ENCODE measurements at regions of chr12 and their contacts with region 1.

Region 1: DNA sequence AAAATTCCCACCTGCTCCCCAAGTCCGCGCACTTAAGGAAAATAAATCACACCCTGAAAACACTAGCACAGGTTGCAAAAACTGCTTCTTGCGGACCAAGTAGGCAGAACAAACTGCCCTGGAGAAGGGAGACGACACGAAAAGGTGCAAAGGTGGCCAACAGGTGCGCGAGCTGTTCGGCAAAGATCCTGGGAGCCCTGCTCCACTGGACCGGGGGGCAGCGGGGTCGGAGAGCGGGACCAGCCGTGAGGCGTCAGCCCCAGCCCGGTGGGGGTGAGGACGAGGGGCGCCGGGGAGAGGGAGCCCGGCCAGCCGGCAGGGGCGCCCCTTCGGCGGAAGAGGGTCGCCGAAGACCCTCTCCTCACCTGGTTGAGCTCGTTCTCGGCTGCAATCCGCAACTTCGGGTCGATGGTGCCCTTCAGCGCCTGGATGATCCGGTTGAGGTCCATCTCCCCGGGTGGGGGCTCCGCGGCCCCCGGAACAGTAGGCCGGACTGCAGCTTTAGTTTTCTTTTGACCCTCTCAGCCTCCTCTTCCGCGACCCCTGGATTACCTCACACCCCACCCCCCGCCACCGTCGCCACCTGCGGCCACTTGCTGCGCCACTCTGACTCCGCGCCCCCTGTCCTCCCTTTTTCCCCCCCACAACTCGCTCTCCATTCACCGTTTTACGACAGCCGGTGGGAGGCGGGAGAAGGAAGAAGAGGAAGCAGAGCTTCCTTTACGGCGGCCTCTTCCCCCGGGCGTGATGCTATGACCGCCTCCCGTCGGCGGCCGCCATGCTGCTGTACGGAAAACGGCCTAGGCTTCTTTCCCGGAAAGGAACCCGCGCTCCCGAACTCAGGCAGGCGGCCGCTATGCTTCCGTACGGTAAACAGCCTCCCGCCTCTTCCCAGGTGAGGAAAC is at the start of gene IPO8:
- DNase-seq: peak; percentile 84
- H3K4me3 Mint-ChIP-seq: peak within 1 kb of the TSS; percentile 94
- H3K27ac Mint-ChIP-seq: peak within 1 kb of the TSS; percentile 79
- H3K4me1 Mint-ChIP-seq: peaks cover 29% of the 10 kb centered on the region
- H3K27me3 Mint-ChIP-seq: peaks cover 3% of the 10 kb centered on the region
- total RNA-seq, gene IPO8: 41.7 to 46.1 TPM

Region 2: DNA sequence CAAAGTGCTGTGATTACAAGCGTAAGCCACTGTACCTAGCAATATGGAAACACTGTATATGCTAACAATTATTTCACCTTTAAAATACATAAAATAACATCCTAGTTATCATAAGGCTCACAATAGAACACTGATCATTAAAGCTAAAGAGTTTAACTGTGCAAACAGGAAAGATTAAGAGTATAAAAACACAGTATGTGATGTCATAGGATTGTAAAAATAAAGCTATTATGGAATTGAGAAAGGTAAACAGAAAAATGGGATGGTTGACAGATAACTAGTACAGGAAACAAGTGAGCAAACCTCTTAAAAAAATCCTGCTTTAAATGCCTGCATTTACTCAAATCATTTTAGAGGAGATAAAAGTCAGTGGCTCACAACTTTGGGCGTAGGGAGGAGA is 11.0 kb after region 1 on chr12:
- CTCF ChIA-PET with region 1: interaction called, 12 read pairs
- POLR2A ChIA-PET with region 1: interaction called, 7 read pairs
- DNase-seq: no peak
- H3K4me3 Mint-ChIP-seq: no peak overlapping the region
- H3K27ac Mint-ChIP-seq: no peak overlapping the region
- H3K4me1 Mint-ChIP-seq: no peaks in the 10 kb centered on the region
- H3K27me3 Mint-ChIP-seq: no peaks in the 10 kb centered on the region

Region 3: DNA sequence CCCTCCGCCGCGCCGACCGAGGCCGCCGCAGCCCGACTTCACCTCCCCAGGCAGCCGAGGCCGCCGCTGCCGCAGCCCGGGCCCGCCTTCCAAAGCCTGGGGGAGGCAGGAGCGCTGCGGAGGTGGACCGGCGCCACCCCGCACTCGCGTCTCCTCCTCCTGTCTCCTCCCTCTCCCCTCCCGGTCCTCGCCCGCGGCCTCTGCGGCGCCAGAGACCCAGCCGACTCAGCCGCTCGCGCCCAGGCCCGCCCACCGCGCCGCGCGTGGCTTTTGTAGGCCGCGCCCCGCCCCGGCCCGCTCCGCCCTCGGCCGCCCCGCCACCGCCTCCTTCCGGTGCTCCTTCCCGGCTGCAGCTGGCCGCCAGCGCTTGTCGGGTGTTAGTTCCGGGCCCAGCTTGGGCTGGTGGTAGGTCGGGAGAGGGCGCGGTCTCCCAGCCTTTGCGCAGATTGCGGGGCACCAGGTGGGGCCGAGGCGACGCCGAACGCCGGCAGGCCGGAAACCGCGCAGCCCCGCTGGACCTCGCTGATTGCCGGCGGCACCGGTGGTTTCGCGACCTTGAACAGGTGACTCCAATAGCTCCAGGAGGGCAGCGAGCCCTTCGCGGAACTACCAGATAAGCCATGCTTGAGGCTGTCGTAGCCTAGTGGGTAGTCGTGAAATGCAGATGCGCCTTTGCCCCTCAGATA is 59.4 kb after region 1 on chr12 and contains the start of gene CAPRIN2:
- CTCF ChIA-PET with region 1: interaction called, 36 read pairs
- POLR2A ChIA-PET with region 1: interaction called, 31 read pairs
- DNase-seq: peak; percentile 95
- H3K4me3 Mint-ChIP-seq: peak within 1 kb of the TSS; percentile 93
- H3K27ac Mint-ChIP-seq: peak within 1 kb of the TSS; percentile 77
- H3K4me1 Mint-ChIP-seq: peaks cover 31% of the 10 kb centered on the region
- H3K27me3 Mint-ChIP-seq: no peaks in the 10 kb centered on the region
- total RNA-seq, gene CAPRIN2: 14.4 to 15.6 TPM

Measured in activated CD4-positive, alpha-beta memory T cell treated with anti-CD3 and anti-CD28 coated beads, Interleukin-2, amount 10 ng/mL, durations not matched to agents 7 days and 5 days (primary cell).